SK-N-SH (cell line): ENCODE measurements at regions of chr1 and their contacts with region 1.

Region 1: GRCh38 chr1:156728597-156729462 is at the start of gene ISG20L2:
- DNase-seq: peak; percentile 92
- H3K4me3 ChIP-seq: peak within 1 kb of the TSS; percentile 76 to 87
- H3K27ac ChIP-seq: peak within 1 kb of the TSS; percentile 83 to 88
- H3K4me1 ChIP-seq: peaks cover 28 to 56% of the 10 kb centered on the region in 2 experiments
- H3K27me3 ChIP-seq: no peaks in the 10 kb centered on the region
- CTCF ChIP-seq: no peak
- EP300 ChIP-seq: no peak
- RAD21 ChIP-seq: no peak
- polyA plus RNA-seq, gene ISG20L2: 31.6 and 44.3 TPM in 2 replicates

Region 2: GRCh38 chr1:156625436-156626078 is 103.3 kb before region 1 on chr1:
- CTCF ChIA-PET with region 1: interaction called, 34 read pairs
- POLR2A ChIA-PET with region 1: no interaction called
- DNase-seq: peak; percentile 79
- H3K4me3 ChIP-seq: peak overlapping the region; percentile 10 to 31; a peak in 2 of 4 replicates
- H3K27ac ChIP-seq: no peak overlapping the region
- H3K4me1 ChIP-seq: peaks cover 0 to 13% of the 10 kb centered on the region in 2 experiments; a peak in 1 of 4 replicates
- H3K27me3 ChIP-seq: peaks cover 29% of the 10 kb centered on the region
- CTCF ChIP-seq: peak; percentile 96
- EP300 ChIP-seq: no peak
- RAD21 ChIP-seq: peak; percentile 76

Region 3: GRCh38 chr1:156740679-156741612 is 12.1 kb after region 1 on chr1 and contains the start of gene MRPL24:
- CTCF ChIA-PET with region 1: interaction called, 20 read pairs
- POLR2A ChIA-PET with region 1: interaction called, 17 read pairs
- DNase-seq: peak; percentile 91
- H3K4me3 ChIP-seq: peak within 1 kb of the TSS; percentile 83 to 94
- H3K27ac ChIP-seq: peak within 1 kb of the TSS; percentile 82 to 92
- H3K4me1 ChIP-seq: peaks cover 9 to 13% of the 10 kb centered on the region in 2 experiments
- H3K27me3 ChIP-seq: no peaks in the 10 kb centered on the region
- CTCF ChIP-seq: no peak
- EP300 ChIP-seq: peak in 1 of 2 experiments; percentile 31; a peak in 2 of 4 replicates
- RAD21 ChIP-seq: no peak; the same call in 1 of the 2 replicates
- polyA plus RNA-seq, gene MRPL24: 149 and 171 TPM in 2 replicates

Region 4: GRCh38 chr1:156773607-156774006 is 44.8 kb after region 1 on chr1:
- CTCF ChIA-PET with region 1: interaction called, 32 read pairs
- POLR2A ChIA-PET with region 1: interaction called, 3 read pairs
- DNase-seq: no peak
- H3K4me3 ChIP-seq: no peak overlapping the region
- H3K27ac ChIP-seq: peak overlapping the region; percentile 29 to 93; a peak in 3 of 4 replicates
- H3K4me1 ChIP-seq: peaks cover 27 to 41% of the 10 kb centered on the region in 2 experiments; a peak in 3 of 4 replicates
- H3K27me3 ChIP-seq: no peaks in the 10 kb centered on the region
- CTCF ChIP-seq: peak; percentile 18; the same call in 1 of the 2 replicates
- EP300 ChIP-seq: no peak
- RAD21 ChIP-seq: no peak

Region 5: DNA sequence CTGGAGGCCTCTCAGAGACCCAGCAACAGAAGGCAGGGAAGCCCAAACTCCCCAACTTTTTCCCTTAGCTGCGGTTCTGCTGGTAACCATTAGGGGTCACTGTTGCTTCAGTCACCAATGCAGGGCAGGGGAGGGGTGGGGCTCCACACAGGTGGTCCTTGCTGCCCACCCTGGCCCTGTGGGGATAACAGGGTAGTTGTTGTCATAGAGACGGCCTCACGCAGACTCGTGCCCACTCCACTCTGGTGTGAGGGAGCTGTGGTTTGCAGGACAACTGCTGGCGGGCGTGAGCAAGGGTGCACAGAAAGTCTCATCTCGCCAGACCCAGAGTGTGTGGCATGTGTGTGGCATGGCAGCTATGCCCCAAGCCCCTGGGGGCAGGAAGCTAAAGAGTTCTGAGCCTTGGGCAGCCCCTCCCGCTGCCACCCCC is 110.2 kb after region 1 on chr1:
- CTCF ChIA-PET with region 1: interaction called, 11 read pairs
- POLR2A ChIA-PET with region 1: no interaction called
- DNase-seq: peak; percentile 81
- H3K4me3 ChIP-seq: no peak overlapping the region; a peak in 1 of 4 replicates
- H3K27ac ChIP-seq: peak overlapping the region in 1 of 2 experiments; percentile 43; a peak in 2 of 4 replicates
- H3K4me1 ChIP-seq: peaks cover 0 to 54% of the 10 kb centered on the region in 2 experiments; a peak in 2 of 4 replicates
- H3K27me3 ChIP-seq: peaks cover 9% of the 10 kb centered on the region; the same call in 1 of the 2 replicates
- CTCF ChIP-seq: peak; percentile 94
- EP300 ChIP-seq: no peak; a peak in 1 of 4 replicates
- RAD21 ChIP-seq: peak; percentile 84

Region 6: GRCh38 chr1:156927215-156928042 is 198.6 kb after region 1 on chr1:
- CTCF ChIA-PET with region 1: interaction called, 47 read pairs
- POLR2A ChIA-PET with region 1: interaction called, 3 read pairs
- DNase-seq: peak; percentile 91
- H3K4me3 ChIP-seq: peak overlapping the region; percentile 37 to 44; a peak in 3 of 4 replicates
- H3K27ac ChIP-seq: peak overlapping the region in 1 of 2 experiments; percentile 6; a peak in 1 of 4 replicates
- H3K4me1 ChIP-seq: peaks cover 5 to 25% of the 10 kb centered on the region in 2 experiments; a peak in 2 of 4 replicates
- H3K27me3 ChIP-seq: no peaks in the 10 kb centered on the region
- CTCF ChIP-seq: peak; percentile 84
- EP300 ChIP-seq: no peak
- RAD21 ChIP-seq: peak; percentile 94